ENCODE measurements at regions of chr11 and their contacts with region 1.

Region 1: GRCh38 chr11:102390667-102391465 is 43.9 kb downstream of the BIRC2 start:
- DNase-seq: peak; percentile 68
- ATAC-seq: peak; percentile 80
- H3K4me3 Mint-ChIP-seq: no peak overlapping the region
- H3K27ac Mint-ChIP-seq: peak overlapping the region; percentile 39
- H3K4me1 Mint-ChIP-seq: peaks cover 43% of the 10 kb centered on the region
- H3K27me3 Mint-ChIP-seq: no peaks in the 10 kb centered on the region
- CTCF ChIP-seq: peak; percentile 88

Region 2: GRCh38 chr11:102361086-102362031 is 29.5 kb before region 1 on chr11:
- CTCF ChIA-PET with region 1: interaction called, 11 read pairs
- POLR2A ChIA-PET with region 1: interaction called, 3 read pairs
- intact Hi-C with region 1: no loop called
- DNase-seq: peak; percentile 27
- ATAC-seq: peak; percentile 79
- H3K4me3 Mint-ChIP-seq: peak overlapping the region; percentile 18
- H3K27ac Mint-ChIP-seq: peak overlapping the region; percentile 90
- H3K4me1 Mint-ChIP-seq: peaks cover 45% of the 10 kb centered on the region
- H3K27me3 Mint-ChIP-seq: no peaks in the 10 kb centered on the region
- CTCF ChIP-seq: no peak

Region 3: DNA sequence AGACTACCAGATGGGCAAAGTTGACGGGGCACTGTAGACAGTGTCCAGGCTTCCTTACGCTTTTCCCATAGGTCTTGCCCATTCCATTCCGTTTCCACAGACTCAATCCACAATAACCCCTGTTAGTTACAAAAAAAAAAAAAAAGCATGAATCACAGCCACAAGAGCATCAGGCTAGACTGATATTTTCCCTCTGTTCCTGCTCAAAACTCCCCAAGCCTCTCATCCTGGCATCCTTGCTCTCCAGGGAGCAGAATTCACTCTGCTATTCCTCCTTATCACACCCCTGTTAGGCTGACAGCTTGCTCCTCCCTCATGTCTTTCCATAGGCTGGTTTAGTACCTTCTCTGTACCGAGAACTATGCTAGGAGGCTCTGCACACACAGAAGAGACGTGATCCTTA is 19.5 kb after region 1 on chr11:
- CTCF ChIA-PET with region 1: interaction called, 16 read pairs
- POLR2A ChIA-PET with region 1: no interaction called
- intact Hi-C with region 1: no loop called
- DNase-seq: no peak
- ATAC-seq: no peak
- H3K4me3 Mint-ChIP-seq: no peak overlapping the region
- H3K27ac Mint-ChIP-seq: peak overlapping the region; percentile 52
- H3K4me1 Mint-ChIP-seq: peaks cover 85% of the 10 kb centered on the region
- H3K27me3 Mint-ChIP-seq: no peaks in the 10 kb centered on the region
- CTCF ChIP-seq: no peak

Region 4: DNA sequence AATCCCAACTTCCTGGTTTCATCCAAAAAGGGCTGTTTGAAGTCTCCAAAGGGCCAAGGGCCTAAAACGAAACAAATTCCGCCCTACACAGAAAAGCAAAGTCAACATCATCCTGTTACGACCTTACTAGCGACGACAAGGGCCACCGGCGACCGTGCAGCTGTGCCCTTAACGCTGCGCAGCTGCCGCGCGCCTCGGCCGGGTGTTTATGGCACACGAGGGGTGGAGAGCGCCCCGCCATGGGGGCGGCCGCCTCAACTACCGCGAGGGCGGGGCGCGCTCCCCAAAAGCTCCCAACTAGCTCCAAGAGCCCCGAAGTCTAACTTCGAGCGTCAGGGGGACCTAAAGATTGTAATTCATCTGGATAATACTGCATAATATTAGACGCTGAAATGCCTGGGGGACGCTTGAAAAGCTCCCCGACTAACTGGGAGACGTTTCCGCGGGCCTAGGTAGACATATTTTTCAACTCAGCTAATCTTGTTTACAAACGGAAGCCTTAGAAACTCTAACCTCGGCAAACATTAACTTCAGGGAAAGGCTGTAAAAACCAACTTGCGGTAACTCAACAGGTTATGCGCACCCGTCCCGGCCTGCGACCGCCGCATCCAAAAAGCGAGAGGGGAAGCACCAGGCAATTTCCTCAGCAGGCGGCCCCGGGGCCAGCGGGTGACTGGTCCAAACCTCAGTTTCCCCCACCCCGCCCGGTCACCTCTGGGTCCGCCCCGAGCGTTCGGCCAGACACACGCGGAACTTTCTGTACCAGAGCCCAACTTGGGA is 61.0 kb after region 1 on chr11:
- CTCF ChIA-PET with region 1: interaction called, 16 read pairs
- POLR2A ChIA-PET with region 1: interaction called, 8 read pairs
- intact Hi-C with region 1: loop called (anchors 1 kb)
- DNase-seq: peak; percentile 88
- ATAC-seq: peak; percentile 64
- H3K4me3 Mint-ChIP-seq: peak overlapping the region; percentile 98
- H3K27ac Mint-ChIP-seq: peak overlapping the region; percentile 96
- H3K4me1 Mint-ChIP-seq: peaks cover 75% of the 10 kb centered on the region
- H3K27me3 Mint-ChIP-seq: no peaks in the 10 kb centered on the region
- CTCF ChIP-seq: peak; percentile 27

Region 5: GRCh38 chr11:102495161-102496042 is 104.5 kb after region 1 on chr11:
- CTCF ChIA-PET with region 1: interaction called, 49 read pairs
- POLR2A ChIA-PET with region 1: interaction called, 4 read pairs
- intact Hi-C with region 1: loop called (anchors 1 kb)
- DNase-seq: peak; percentile 51
- ATAC-seq: peak; percentile 68
- H3K4me3 Mint-ChIP-seq: no peak overlapping the region
- H3K27ac Mint-ChIP-seq: peak overlapping the region; percentile 14
- H3K4me1 Mint-ChIP-seq: peaks cover 23% of the 10 kb centered on the region
- H3K27me3 Mint-ChIP-seq: peaks cover 1% of the 10 kb centered on the region
- CTCF ChIP-seq: peak; percentile 92